ENCODE measurements at regions of chr4 and their contacts with region 1.

Region 1: GRCh38 chr4:30605616-30606190 is 114.5 kb upstream of the PCDH7 start:
- DNase-seq: peak; percentile 47 to 48
- H3K4me3 ChIP-seq: no peak overlapping the region
- H3K4me3 Mint-ChIP-seq: no peak overlapping the region
- H3K27ac Mint-ChIP-seq: peak overlapping the region; percentile 73
- H3K4me1 ChIP-seq: peaks cover 14% of the 10 kb centered on the region
- H3K4me1 Mint-ChIP-seq: peaks cover 7% of the 10 kb centered on the region
- H3K27me3 ChIP-seq: no peaks in the 10 kb centered on the region
- H3K27me3 Mint-ChIP-seq: no peaks in the 10 kb centered on the region
- CTCF ChIP-seq: no peak

Region 2: DNA sequence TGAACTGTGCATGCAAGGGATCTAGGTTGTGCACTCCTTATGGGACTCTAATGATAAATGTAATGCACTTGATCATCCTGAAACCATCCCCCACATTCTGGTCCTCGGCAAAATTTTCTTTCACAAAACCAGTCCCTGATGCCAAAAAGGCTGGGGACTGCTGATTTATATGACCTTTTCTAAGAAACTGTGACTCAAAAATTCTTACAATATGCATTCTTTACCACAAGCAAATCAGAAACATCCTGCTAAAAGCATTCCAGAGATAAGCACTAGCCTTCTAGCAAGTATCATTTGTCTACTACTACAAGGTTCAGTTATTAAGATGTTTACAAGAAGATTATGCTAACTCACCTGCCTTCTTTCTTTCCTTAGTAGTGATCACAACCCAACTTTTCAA is 52.0 kb before region 1 on chr4:
- CTCF ChIA-PET with region 1: no interaction called
- POLR2A ChIA-PET with region 1: no interaction called
- intact Hi-C with region 1: loop called (anchors 1 kb)
- DNase-seq: peak in 1 of 2 experiments; percentile 16
- H3K4me3 ChIP-seq: no peak overlapping the region
- H3K4me3 Mint-ChIP-seq: no peak overlapping the region
- H3K27ac Mint-ChIP-seq: no peak overlapping the region
- H3K4me1 ChIP-seq: peaks cover 16% of the 10 kb centered on the region
- H3K4me1 Mint-ChIP-seq: peaks cover 25% of the 10 kb centered on the region
- H3K27me3 ChIP-seq: no peaks in the 10 kb centered on the region
- H3K27me3 Mint-ChIP-seq: no peaks in the 10 kb centered on the region
- CTCF ChIP-seq: no peak

Region 3: DNA sequence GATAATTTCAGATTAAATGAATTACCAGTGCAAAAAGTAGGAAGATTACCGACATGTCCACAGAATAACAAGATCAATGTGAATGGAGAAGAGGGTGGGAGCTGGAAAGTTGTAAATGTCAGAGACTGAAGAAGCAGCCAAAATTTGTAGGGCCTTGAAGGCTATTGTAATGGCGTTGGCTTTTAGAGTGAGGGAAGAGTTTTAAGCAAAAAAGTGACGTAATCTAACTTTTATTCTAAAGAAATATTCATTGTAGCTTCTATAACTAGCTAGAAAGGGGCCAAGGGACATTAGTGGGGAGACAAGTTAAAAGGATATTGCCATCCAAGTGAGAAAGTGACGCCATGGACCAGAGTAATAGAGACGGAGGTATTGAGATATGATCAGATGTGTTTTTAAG is 51.1 kb after region 1 on chr4:
- CTCF ChIA-PET with region 1: no interaction called
- POLR2A ChIA-PET with region 1: no interaction called
- intact Hi-C with region 1: loop called (anchors 2 kb)
- DNase-seq: no peak
- H3K4me3 ChIP-seq: no peak overlapping the region
- H3K4me3 Mint-ChIP-seq: no peak overlapping the region
- H3K27ac Mint-ChIP-seq: no peak overlapping the region
- H3K4me1 ChIP-seq: peaks cover 3% of the 10 kb centered on the region
- H3K4me1 Mint-ChIP-seq: no peaks in the 10 kb centered on the region
- H3K27me3 ChIP-seq: no peaks in the 10 kb centered on the region
- H3K27me3 Mint-ChIP-seq: no peaks in the 10 kb centered on the region
- CTCF ChIP-seq: no peak

Measured in Caco-2 (cell line).